Left colon (tissue), 2 donors: ENCODE measurements at regions of chr9 and their contacts with region 1.

Region 1: DNA sequence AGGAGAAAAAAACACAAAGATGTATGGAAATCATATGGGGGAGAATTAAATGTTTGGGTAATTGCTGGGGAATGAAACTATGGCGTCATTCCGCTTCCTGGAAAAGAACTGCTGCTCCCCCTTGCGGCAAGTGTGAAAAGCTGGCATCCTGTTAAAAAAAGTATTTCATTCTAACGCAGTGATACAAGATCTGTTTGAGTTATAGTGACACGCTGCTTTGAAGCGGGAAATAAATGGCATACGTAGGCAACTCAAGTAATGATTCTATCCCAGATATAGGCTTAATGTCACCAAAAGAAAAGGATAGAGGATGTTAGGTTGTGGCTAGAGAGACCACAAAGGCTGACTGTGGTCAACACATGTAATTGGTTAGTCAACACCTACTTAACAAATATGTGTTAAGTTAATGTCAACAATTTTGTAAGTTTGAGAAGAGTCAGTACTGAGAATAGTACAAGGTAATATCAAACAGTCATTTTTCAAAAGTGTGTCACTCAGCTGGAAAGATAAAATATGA is 70.2 kb upstream of the ALDH1A1 start:
- DNase-seq: peak; percentile 36 to 44
- ATAC-seq: peak; percentile 72

Region 2: GRCh38 chr9:72856972-72857623 is 166.0 kb before region 1 on chr9:
- intact Hi-C with region 1: loop called in 1 of 2 experiments (anchors 5 kb)
- DNase-seq: peak in 1 of 2 donors; percentile 8
- ATAC-seq: peak; percentile 69

Region 3: DNA sequence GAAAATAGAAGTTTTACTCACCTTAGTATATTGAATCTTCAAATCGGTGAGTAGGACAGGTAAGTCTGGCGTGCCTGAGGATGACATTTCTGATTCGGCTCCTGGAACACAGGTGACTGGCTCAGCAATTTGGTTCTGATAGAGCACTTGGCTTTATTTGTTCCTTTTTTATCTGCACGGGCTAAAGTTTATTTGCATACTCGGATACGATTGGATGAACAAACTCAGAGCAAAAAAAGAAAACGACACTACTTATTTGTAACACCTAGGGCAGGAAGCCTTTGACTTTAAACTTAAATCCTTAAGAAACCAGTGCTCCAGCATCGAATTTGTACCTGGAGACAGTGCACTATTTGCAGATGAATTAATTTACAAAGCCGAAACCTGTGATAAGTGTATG is 70.2 kb before region 1 on chr9 and contains the start of gene ALDH1A1:
- intact Hi-C with region 1: loop called in 1 of 2 experiments (anchors 10 kb)
- DNase-seq: peak in 1 of 2 donors; percentile 46
- ATAC-seq: peak; percentile 72
- total RNA-seq, gene ALDH1A1: 91.0 to 105 TPM

Region 4: GRCh38 chr9:74322661-74323314 is 1299.7 kb after region 1 on chr9:
- intact Hi-C with region 1: no loop called
- DNase-seq: no peak
- ATAC-seq: no peak